ENCODE measurements at regions of chr7 and their contacts with region 1.

Region 1: DNA sequence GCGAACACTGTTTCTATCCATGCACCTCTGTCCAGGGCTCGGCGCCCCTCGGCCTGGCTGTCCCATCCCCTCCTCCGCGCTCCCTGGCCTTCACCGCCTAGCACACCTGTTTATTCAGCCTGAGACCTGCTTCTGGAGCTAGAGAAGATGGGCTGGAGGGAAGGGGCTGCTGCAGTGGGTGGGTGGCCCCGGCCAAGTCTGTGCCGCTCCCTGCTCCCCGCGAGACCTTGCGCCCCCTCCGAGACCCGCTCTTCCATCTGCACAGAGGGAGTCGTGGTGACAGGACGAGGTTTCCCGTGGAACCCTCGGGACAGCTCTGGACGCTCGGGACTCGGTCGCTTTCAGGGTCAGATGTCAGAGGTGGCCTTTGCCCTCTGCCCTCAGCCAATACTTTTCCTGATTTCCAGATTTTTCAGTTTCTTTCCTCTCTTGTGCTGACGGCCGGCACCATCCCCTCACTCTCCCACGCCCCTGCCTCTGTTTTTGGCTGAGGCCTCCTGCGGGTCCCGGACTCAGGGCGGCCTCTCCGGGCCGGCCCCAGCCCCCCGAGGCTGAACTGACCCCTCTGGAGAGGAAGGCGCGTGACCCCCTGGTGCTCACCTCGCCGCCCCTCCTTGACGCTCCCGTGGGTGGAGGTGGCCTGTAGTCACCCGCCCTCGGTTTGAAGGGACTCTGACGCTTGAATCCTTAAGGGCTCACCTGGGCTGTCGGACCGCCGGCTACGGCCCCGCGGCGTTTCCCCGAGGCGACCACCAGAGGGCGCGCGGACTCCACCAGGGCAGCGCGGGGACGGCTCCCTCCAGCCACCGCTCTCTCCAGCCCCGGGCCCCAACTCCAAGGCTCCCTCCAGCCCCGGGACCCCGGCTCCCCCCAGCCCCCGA is 15.6 kb downstream of the SHH start:
- DNase-seq: peak in 1 of 2 donors; percentile 76
- ATAC-seq: peak; percentile 89

Region 2: DNA sequence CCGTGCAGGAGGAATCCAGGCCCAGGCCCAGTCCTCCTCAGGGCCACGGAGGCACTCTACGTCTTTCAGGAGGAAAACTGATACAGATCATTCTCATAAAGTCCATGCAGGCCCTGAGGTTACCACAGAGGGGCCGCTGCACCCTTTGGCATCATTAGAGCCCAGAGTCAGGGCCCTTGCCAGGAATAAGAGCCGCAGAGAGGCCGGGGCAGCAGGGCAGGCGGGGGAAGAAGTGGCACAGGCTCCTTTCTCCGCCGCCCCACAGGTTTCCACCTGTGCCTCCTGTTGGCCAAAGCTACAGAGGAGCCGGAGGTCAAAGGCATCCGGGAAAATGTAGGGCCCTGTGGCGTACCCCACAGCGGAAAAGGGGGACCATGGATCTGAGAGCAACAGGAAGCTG is 382.2 kb after region 1 on chr7:
- intact Hi-C with region 1: no loop called
- DNase-seq: no peak
- ATAC-seq: no peak

Region 3: DNA sequence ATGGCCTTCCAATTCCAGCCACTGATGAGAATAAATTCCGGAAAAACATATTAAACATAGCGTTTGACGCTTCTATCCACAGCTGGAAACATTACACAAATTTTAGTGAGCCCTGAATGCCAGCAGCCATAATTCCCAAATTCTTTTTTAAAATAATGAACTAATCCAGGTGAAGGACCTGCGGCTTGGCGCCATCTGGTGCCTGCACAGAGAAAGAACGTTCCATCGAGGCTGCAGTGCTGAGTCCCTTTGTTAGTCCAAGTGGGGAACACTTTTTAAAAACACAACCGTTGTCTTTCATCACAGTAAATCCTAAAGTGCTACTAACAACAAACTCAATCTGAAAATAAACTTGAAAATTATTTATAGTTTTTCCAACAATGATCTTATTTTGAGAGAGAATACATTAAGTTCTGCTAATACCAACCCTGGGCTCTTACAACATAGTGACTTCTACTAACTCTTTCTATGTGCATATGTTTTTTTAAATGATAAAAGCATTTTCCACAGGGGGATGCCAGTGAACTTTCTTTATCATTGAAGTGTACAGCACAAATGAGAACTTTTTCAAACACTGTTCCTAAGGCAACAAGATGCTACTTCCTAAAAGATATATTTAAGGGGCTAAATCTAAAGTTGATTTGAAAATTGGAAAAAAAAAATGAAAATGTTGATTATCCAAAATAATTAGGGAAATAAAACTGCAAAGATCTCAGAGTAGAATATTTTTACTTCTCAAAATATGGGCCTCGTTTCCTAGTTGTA is 677.0 kb after region 1 on chr7:
- intact Hi-C with region 1: loop called in 1 of 2 experiments (anchors 10 kb)
- DNase-seq: peak in 1 of 2 donors; percentile 41
- ATAC-seq: peak; percentile 71

Region 4: GRCh38 chr7:156764016-156764669 is 967.5 kb after region 1 on chr7:
- intact Hi-C with region 1: loop called in 1 of 2 experiments (anchors 5 kb)
- DNase-seq: peak; percentile 70 to 76
- ATAC-seq: peak; percentile 100